HEK293 (cell line): ENCODE measurements at regions of chr2 and their contacts with region 1.

Region 1: GRCh38 chr2:18368008-18368407 is 192.4 kb downstream of the RDH14 start:
- H3K4me3 ChIP-seq: no peak overlapping the region
- H3K27ac ChIP-seq: no peak overlapping the region
- H3K4me1 ChIP-seq: 0 out of 2 replicates have a peak, but pooled peaks cover 3% of the 10 kb centered on the region
- CTCF ChIP-seq: no peak

Region 2: DNA sequence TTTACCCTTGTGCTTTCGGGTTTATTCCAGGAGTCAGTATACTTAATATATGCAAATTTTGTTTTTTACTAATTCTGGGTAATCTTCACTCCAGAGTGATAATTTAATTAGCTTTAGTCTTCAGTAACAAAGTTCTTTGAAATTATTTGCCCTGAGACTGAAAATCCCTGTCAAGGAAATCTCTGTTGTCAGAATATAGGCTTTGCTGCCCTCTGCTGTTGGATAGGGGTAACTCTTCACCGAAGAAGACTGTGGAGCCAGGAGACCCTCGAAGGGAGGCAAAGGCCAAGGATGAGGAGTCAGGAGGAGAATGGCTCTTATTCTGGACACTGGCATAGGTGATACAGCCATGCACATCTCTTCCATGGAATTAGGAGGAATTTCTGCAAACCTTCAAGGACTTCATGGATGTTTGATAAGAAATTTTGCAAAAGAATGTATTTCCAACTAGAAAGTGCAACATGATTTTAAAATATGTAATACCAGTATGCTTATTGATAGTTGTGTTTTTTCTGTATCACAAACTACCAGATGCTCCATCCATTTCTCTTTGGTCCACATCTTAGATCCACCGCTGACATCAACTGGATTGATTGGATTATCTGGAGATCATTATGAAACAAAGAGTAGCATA is 10.1 kb after region 1 on chr2:
- CTCF ChIA-PET with region 1: interaction called, 10 read pairs
- POLR2A ChIA-PET with region 1: no interaction called
- H3K4me3 ChIP-seq: no peak overlapping the region
- H3K27ac ChIP-seq: no peak overlapping the region
- H3K4me1 ChIP-seq: 0 out of 2 replicates have a peak, but pooled peaks cover under 1% of the 10 kb centered on the region
- CTCF ChIP-seq: peak; percentile 53; the same call in 1 of the 2 replicates